IMR-90 (cell line): ENCODE measurements at regions of chr21 and their contacts with region 1.

Region 1: GRCh38 chr21:37758982-37759381 is 157.3 kb downstream of the KCNJ6 start:
- DNase-seq: peak; percentile 62
- ATAC-seq: peak; percentile 94
- H3K4me3 ChIP-seq: no peak overlapping the region
- H3K27ac ChIP-seq: no peak overlapping the region
- H3K4me1 ChIP-seq: no peaks in the 10 kb centered on the region
- H3K27me3 ChIP-seq: peaks cover 27% of the 10 kb centered on the region
- CTCF ChIP-seq: peak; percentile 89
- POLR2A ChIP-seq: no peak
- RAD21 ChIP-seq: peak; percentile 98

Region 2: GRCh38 chr21:37878946-37879660 is 120.1 kb after region 1 on chr21:
- CTCF ChIA-PET with region 1: no interaction called
- POLR2A ChIA-PET with region 1: no interaction called
- dilution Hi-C with region 1: no loop called
- in situ Hi-C with region 1: no loop called
- intact Hi-C with region 1: loop called (anchors 5 kb)
- DNase-seq: peak; percentile 93
- ATAC-seq: peak; percentile 38; the same call in 1 of the 2 replicates
- H3K4me3 ChIP-seq: no peak overlapping the region
- H3K27ac ChIP-seq: no peak overlapping the region
- H3K4me1 ChIP-seq: peaks cover 10% of the 10 kb centered on the region
- H3K27me3 ChIP-seq: peaks cover 6% of the 10 kb centered on the region; the same call in 1 of the 2 replicates
- CTCF ChIP-seq: no peak
- POLR2A ChIP-seq: no peak
- RAD21 ChIP-seq: no peak

Region 3: DNA sequence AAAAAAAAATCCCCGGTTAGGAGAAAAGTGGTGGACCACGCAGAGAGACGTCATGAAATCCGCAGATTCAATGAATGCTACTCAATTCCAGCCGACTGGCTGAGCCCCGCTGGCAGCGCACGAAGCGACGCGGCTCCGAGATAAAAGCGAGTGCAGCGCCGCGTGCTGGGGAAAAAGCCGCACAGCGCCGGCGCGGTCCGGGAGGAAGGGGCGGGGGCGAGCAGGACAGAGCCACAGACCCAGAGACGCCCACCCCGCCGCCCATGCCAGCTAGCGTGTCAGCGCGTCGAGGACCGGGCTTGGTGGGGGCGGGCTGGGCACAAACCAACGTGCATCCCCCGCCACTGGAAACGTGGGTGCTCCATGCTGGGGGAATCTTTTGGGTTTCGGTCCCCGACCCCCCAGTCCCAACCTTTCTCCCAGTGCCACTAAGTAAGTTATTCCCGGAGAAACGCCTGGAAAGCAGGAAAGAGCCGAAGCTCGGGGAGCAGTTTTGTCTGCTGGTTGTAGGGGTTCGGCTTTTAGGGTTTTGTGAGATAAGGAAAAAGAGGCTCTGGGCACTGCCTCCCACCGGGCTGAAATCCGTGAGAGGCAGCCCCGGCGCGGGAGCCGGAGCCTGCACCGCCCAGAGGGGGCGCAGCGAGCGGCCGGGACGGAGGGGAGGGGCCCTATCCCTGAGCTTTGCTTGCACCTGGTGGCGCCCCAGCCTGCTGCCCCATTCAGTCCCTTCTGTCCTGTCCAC is 157.5 kb after region 1 on chr21 and contains the start of gene KCNJ6:
- CTCF ChIA-PET with region 1: interaction called, 7 read pairs
- POLR2A ChIA-PET with region 1: no interaction called
- dilution Hi-C with region 1: no loop called
- in situ Hi-C with region 1: no loop called
- intact Hi-C with region 1: loop called (anchors 1 kb)
- DNase-seq: peak; percentile 52
- ATAC-seq: peak; percentile 89
- H3K4me3 ChIP-seq: peak within 1 kb of the TSS; percentile 14
- H3K27ac ChIP-seq: no peak within 1 kb of the TSS; the same call in 1 of the 2 replicates
- H3K4me1 ChIP-seq: peaks cover 6% of the 10 kb centered on the region
- H3K27me3 ChIP-seq: peaks cover 37% of the 10 kb centered on the region
- CTCF ChIP-seq: peak; percentile 91
- POLR2A ChIP-seq: no peak
- RAD21 ChIP-seq: peak; percentile 90
- total RNA-seq, gene KCNJ6: under 0.01 TPM in 2 replicates

Region 4: DNA sequence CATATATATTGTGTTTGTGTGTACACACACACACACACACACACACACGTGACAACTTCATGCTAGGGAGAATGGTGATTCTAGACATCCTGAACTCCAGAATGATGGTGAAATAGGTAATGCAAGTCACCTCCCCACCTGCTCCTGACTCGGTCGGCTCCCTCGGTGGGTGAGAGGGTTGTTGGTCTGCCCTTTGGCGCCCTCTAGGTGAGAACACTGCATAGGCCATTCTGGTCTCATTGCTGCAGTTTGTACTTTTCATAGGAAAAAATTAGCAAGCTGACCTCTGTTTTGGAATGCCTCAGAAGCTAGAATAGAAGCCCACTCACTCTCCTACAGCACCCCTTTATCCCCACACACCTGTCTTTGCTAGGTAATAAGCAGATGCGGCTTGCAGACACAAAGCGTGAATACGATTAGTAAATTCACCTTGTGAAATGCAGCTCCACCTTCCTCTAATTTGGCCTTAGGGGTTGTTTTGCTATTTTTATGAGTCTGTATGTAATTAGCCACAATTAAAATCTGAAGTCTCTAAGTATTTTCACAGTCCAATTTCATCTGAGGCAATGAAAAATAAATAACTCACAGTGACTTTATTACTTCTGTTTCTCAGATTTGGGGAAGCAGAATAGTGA is 367.8 kb after region 1 on chr21:
- CTCF ChIA-PET with region 1: no interaction called
- POLR2A ChIA-PET with region 1: no interaction called
- dilution Hi-C with region 1: no loop called
- in situ Hi-C with region 1: no loop called
- intact Hi-C with region 1: loop called (anchors 1 kb)
- DNase-seq: peak; percentile 33
- ATAC-seq: peak; percentile 81
- H3K4me3 ChIP-seq: no peak overlapping the region
- H3K27ac ChIP-seq: no peak overlapping the region
- H3K4me1 ChIP-seq: no peaks in the 10 kb centered on the region
- H3K27me3 ChIP-seq: peaks cover 22% of the 10 kb centered on the region
- CTCF ChIP-seq: peak; percentile 77
- POLR2A ChIP-seq: no peak
- RAD21 ChIP-seq: peak; percentile 83